ENCODE measurements at regions of chr14 and their contacts with region 1.

Region 1: GRCh38 chr14:50109342-50109741 is 7.0 kb downstream of the VCPKMT start:
- DNase-seq: no peak
- ATAC-seq: no peak
- H3K4me3 Mint-ChIP-seq: no peak overlapping the region
- H3K27ac Mint-ChIP-seq: peak overlapping the region; percentile 20
- H3K4me1 Mint-ChIP-seq: peaks cover 46% of the 10 kb centered on the region
- H3K27me3 Mint-ChIP-seq: no peaks in the 10 kb centered on the region
- CTCF ChIP-seq: no peak

Region 2: GRCh38 chr14:49879683-49880204 is 229.6 kb before region 1 on chr14:
- CTCF ChIA-PET with region 1: interaction called, 7 read pairs
- POLR2A ChIA-PET with region 1: interaction called, 8 read pairs
- intact Hi-C with region 1: loop called (anchors 1 kb)
- DNase-seq: no peak
- ATAC-seq: peak; percentile 90
- H3K4me3 Mint-ChIP-seq: no peak overlapping the region
- H3K27ac Mint-ChIP-seq: peak overlapping the region; percentile 47
- H3K4me1 Mint-ChIP-seq: peaks cover 14% of the 10 kb centered on the region
- H3K27me3 Mint-ChIP-seq: no peaks in the 10 kb centered on the region
- CTCF ChIP-seq: no peak

Region 3: GRCh38 chr14:50045039-50045711 is 64.2 kb before region 1 on chr14:
- CTCF ChIA-PET with region 1: interaction called, 4 read pairs
- POLR2A ChIA-PET with region 1: interaction called, 7 read pairs
- intact Hi-C with region 1: loop called (anchors 2 kb)
- DNase-seq: no peak
- ATAC-seq: peak; percentile 70
- H3K4me3 Mint-ChIP-seq: peak overlapping the region; percentile 2
- H3K27ac Mint-ChIP-seq: peak overlapping the region; percentile 92
- H3K4me1 Mint-ChIP-seq: peaks cover 71% of the 10 kb centered on the region
- H3K27me3 Mint-ChIP-seq: no peaks in the 10 kb centered on the region
- CTCF ChIP-seq: no peak

Region 4: DNA sequence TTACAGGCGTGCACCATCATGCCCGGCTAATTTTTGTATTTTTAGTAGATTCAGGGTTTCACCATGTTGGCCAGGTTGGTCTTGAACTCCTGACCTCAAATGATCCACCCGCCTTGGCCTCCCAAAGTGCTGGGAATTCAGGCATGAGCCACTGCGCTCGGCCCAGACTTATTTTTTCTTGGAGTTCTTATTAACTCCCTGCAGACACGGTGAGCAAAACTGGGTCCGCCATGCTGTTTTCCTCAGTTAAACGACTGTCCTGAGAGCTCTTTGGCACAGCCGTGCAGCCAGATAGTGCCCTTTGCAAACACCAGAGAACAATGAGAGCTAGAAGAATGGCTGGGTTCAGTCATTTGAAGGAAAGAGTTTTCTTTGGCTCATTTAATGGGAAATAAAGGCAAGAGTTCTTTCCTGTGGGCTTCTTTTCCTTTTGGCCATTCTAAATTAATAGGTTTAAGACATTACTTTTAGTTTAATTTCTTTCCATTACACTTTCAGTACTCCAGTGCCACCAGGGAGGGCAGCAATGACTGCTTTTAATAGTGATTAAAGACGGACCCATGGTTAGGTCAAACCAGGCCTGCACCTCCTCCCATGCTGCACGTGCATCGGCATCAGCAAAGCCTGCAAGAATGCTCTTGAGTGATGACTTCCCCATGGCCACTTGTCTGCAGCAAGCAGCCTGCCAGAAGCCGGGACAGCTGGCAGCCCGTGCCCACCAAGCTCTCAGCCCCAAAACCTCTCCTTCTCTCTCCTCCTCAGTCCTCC is 53.7 kb before region 1 on chr14:
- CTCF ChIA-PET with region 1: interaction called, 32 read pairs
- POLR2A ChIA-PET with region 1: interaction called, 6 read pairs
- intact Hi-C with region 1: loop called (anchors 1 kb)
- DNase-seq: no peak
- ATAC-seq: peak; percentile 90
- H3K4me3 Mint-ChIP-seq: no peak overlapping the region
- H3K27ac Mint-ChIP-seq: peak overlapping the region; percentile 78
- H3K4me1 Mint-ChIP-seq: peaks cover 42% of the 10 kb centered on the region
- H3K27me3 Mint-ChIP-seq: no peaks in the 10 kb centered on the region
- CTCF ChIP-seq: no peak

Region 5: DNA sequence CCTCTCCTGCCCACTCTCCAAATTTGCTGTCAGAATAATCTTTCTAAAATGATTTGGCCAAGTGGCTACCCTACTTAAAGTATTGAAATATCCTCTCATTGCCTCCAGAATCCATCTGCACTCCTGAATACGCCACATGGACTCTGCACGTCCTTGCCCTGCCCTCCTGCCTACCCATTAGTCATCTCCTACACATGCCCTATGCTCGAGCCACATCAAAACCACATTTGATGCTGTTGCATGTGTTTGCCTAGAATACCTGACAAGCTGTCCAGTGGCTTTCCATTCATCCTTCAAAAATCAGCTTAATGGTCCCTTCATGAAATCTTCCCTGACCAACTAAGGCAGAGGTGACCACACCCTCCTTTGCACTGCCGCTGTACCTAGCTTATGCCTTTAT is 10.0 kb before region 1 on chr14:
- CTCF ChIA-PET with region 1: no interaction called
- POLR2A ChIA-PET with region 1: interaction called, 17 read pairs
- intact Hi-C with region 1: loop called (anchors 1 kb)
- DNase-seq: no peak
- ATAC-seq: no peak
- H3K4me3 Mint-ChIP-seq: no peak overlapping the region
- H3K27ac Mint-ChIP-seq: peak overlapping the region; percentile 62
- H3K4me1 Mint-ChIP-seq: peaks cover 74% of the 10 kb centered on the region
- H3K27me3 Mint-ChIP-seq: no peaks in the 10 kb centered on the region
- CTCF ChIP-seq: no peak

Region 6: GRCh38 chr14:50222061-50222613 is 112.8 kb after region 1 on chr14:
- CTCF ChIA-PET with region 1: no interaction called
- POLR2A ChIA-PET with region 1: no interaction called
- intact Hi-C with region 1: no loop called
- DNase-seq: no peak
- ATAC-seq: no peak
- H3K4me3 Mint-ChIP-seq: no peak overlapping the region
- H3K27ac Mint-ChIP-seq: peak overlapping the region; percentile 18
- H3K4me1 Mint-ChIP-seq: peaks cover 50% of the 10 kb centered on the region
- H3K27me3 Mint-ChIP-seq: no peaks in the 10 kb centered on the region
- CTCF ChIP-seq: no peak